GM10248 (cell line): ENCODE measurements at regions of chr12 and their contacts with region 1.

Region 1: GRCh38 chr12:50504798-50505385 is at the start of gene DIP2B:
- DNase-seq: peak; percentile 91
- CTCF ChIP-seq: peak; percentile 93

Region 2: GRCh38 chr12:50275556-50275955 is 229.3 kb before region 1 on chr12:
- CTCF ChIA-PET with region 1: no interaction called
- POLR2A ChIA-PET with region 1: no interaction called
- DNase-seq: no peak
- CTCF ChIP-seq: no peak

Region 3: GRCh38 chr12:50482566-50482965 is 22.3 kb before region 1 on chr12:
- CTCF ChIA-PET with region 1: interaction called, 11 read pairs
- POLR2A ChIA-PET with region 1: no interaction called
- DNase-seq: no peak
- CTCF ChIP-seq: no peak

Region 4: DNA sequence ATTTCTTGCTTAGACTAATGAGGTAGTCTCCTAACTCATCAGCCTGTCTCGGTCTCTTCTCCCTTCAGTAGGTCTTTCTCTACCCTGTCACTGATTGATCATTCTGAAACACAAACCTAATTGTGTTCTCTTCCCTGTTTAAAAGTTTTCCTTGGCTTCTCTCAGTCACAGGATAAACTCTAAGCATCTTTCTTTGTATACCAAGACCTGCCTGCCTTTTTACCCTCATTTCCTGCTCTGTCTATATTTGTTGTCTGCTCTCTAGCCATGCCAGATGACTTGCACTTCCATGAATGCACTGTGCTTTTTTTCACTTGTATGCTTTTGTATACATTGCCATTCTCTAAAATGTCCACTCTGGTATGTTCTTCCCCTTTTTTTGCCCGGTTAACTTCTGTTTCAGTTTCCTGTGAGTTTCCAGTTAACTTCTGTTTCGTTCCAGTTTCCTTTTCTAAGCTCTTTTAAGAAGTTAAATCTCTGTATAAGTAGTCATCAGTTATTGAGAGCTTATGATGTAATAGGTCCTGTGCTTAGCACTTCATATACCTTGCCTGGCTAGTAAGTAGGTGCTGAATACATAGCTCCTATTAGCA is 12.7 kb after region 1 on chr12:
- CTCF ChIA-PET with region 1: interaction called, 75 read pairs
- POLR2A ChIA-PET with region 1: interaction called, 6 read pairs
- DNase-seq: peak; percentile 68
- CTCF ChIP-seq: no peak

Region 5: DNA sequence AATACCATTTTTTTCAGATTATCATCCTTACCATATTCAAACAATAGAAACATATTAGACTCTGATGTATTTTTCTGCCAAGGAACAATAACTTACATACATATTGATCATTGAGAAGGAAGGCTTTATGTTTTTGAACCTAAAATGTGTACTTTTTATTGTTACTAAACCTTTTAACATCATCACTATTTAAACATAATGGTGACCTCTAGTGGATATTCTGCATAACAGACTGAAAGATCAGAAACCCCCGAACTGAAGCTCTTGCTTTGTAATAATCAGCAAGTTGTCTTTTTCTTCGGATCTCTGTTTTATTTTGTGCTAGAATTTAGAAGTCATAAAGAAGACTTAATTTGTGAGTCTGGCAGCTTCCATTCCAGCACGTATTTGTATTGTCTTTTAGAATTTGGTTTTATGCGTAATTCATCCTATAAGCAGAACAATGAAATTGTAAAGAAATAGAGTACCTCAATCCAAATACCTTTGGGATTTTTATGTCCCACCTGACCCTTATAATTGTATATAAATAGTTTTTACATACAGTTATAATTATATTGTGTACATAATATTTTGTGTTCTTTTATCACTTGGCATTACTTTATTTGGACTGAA is 133.1 kb after region 1 on chr12:
- CTCF ChIA-PET with region 1: interaction called, 43 read pairs
- POLR2A ChIA-PET with region 1: interaction called, 3 read pairs
- DNase-seq: peak; percentile 59
- CTCF ChIP-seq: peak; percentile 56

Region 6: GRCh38 chr12:50661300-50662115 is 156.6 kb after region 1 on chr12:
- CTCF ChIA-PET with region 1: interaction called, 11 read pairs
- POLR2A ChIA-PET with region 1: no interaction called
- DNase-seq: peak; percentile 41
- CTCF ChIP-seq: no peak